Ovary (tissue), 10 donors: ENCODE measurements at regions of chr1 and their contacts with region 1.

Region 1: DNA sequence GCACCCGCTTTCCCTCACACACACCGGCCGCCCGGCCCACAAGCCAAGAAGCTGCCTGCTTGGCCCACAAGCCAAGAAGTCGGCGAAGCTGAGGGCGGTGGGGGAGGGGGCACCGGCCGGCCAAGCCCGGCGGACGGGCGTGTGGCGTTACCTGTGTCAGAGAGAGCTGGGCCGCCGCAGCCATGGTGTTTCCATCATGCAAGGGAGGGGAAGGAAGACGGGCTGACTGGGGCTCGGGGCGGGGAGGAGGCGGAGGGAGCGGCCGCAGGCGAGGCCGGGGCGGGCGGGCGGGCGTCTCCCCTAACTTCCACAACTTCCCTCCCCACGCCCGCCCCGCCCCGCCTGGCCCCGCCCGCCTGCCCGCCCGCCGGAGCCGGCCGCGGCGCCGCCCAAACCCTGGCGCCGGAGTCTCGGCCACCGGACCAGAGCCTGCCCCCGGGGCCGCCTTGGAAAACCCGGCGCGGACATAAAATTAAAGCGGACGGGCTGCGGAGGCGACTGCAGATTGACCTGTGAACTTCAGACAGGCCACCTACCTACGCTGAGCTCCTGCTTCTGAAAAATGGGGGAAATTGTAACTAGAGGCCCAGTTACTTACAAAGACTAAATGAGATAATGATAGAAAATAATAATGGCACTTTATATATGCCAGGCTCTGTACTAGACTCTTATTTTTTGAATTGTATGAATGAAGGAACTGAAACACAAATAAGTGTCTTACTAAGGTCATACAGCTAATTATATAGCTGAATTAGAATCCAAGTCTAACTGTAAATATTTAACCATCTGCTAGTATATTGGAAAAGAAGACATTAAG is at the start of gene EPS15:
- DNase-seq: peak; percentile 85 to 90 (median 88)
- H3K4me3 ChIP-seq: peak within 1 kb of the TSS; percentile 58
- H3K27ac ChIP-seq: peak within 1 kb of the TSS; percentile 90 to 92
- H3K4me1 ChIP-seq: peaks cover 3% of the 10 kb centered on the region
- H3K27me3 ChIP-seq: no peaks in the 10 kb centered on the region
- CTCF ChIP-seq: peak in 1 of 3 donors; percentile 16
- EP300 ChIP-seq: no peak
- POLR2A ChIP-seq: peak; percentile 46
- total RNA-seq, gene EPS15: 52.3 to 84.0 (median 74.3) TPM

Region 2: GRCh38 chr1:51344602-51345299 is 174.5 kb before region 1 on chr1:
- intact Hi-C with region 1: loop called in 1 of 4 experiments (anchors 5 kb)
- DNase-seq: no peak
- H3K4me3 ChIP-seq: no peak overlapping the region
- H3K27ac ChIP-seq: no peak overlapping the region
- H3K4me1 ChIP-seq: peaks cover 5% of the 10 kb centered on the region
- H3K27me3 ChIP-seq: no peaks in the 10 kb centered on the region
- CTCF ChIP-seq: no peak
- EP300 ChIP-seq: no peak
- POLR2A ChIP-seq: no peak